ENCODE measurements at regions of chr1 and their contacts with region 1.

Region 1: GRCh38 chr1:86833461-86834215 is 80.3 kb downstream of the SELENOF start:
- DNase-seq: peak; percentile 79
- ATAC-seq: peak; percentile 98
- H3K4me3 ChIP-seq: no peak overlapping the region
- H3K27ac ChIP-seq: no peak overlapping the region
- H3K4me1 ChIP-seq: no peaks in the 10 kb centered on the region; a peak in 1 of 4 replicates
- H3K27me3 ChIP-seq: no peaks in the 10 kb centered on the region
- CTCF ChIP-seq: peak; percentile 43 to 80 (median 66)
- POLR2A ChIP-seq: no peak
- RAD21 ChIP-seq: peak; percentile 85

Region 2: GRCh38 chr1:86573763-86574484 is 259.7 kb before region 1 on chr1:
- CTCF ChIA-PET with region 1: no interaction called
- POLR2A ChIA-PET with region 1: no interaction called
- RAD21 ChIA-PET with region 1: no interaction called
- intact Hi-C with region 1: no loop called
- DNase-seq: no peak
- ATAC-seq: no peak
- H3K4me3 ChIP-seq: no peak overlapping the region
- H3K27ac ChIP-seq: no peak overlapping the region
- H3K4me1 ChIP-seq: no peaks in the 10 kb centered on the region
- H3K27me3 ChIP-seq: no peaks in the 10 kb centered on the region
- CTCF ChIP-seq: no peak
- POLR2A ChIP-seq: no peak
- RAD21 ChIP-seq: no peak

Region 3: DNA sequence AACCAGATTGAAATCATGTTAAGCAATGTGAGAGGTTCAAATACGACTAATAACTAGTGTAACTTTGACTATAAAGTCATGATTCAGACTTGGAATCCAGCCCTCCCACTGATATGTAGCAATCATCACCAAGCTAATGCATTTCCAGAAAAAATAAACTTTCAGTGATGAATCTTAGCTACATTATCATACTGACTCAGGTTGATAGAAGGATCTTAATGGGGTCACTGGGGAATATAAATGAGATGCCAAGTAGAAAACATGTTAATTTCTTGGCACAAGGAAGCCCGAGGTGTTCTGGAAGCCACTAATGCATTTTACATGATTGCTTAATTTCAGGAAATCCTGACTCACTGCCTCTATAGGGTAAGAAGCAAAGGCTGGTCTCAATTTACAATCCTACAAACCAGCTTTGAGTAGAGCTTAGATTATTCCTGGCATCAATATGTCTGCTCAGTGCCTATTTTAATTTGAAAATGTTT is 12.6 kb after region 1 on chr1:
- CTCF ChIA-PET with region 1: no interaction called
- POLR2A ChIA-PET with region 1: no interaction called
- RAD21 ChIA-PET with region 1: no interaction called
- intact Hi-C with region 1: no loop called
- DNase-seq: no peak
- ATAC-seq: no peak
- H3K4me3 ChIP-seq: no peak overlapping the region
- H3K27ac ChIP-seq: no peak overlapping the region
- H3K4me1 ChIP-seq: peaks cover 0 to 4% of the 10 kb centered on the region in 2 experiments; a peak in 1 of 4 replicates
- H3K27me3 ChIP-seq: no peaks in the 10 kb centered on the region
- CTCF ChIP-seq: no peak
- POLR2A ChIP-seq: no peak
- RAD21 ChIP-seq: no peak

Region 4: DNA sequence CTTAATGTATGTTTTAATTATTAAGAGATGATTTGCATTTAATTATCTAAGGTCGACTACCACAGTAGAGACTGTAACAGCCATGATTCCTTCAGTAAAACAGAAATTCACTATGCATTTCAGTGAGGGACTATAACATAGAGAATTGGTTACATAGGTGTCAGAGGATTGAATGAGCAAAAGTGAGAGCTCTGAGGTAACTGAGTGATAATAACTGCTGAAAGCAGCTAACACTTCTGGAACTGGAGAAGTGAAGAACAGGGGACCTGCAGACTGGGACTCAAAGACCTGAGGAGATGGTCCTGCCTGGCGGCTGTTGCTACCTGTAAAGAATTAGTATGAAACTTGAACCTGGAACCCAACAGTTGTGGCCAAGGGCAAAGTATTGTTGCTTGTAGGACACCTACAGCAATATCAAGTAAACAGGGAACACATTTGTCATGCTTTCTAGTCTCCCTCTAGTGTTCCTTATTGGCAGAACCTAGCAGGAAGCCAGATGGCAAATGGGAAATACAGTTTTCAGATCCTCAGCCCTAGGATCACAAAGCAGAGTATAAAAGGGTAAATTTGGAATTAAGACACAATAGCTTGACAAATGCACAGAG is 191.4 kb after region 1 on chr1:
- CTCF ChIA-PET with region 1: no interaction called
- POLR2A ChIA-PET with region 1: no interaction called
- RAD21 ChIA-PET with region 1: no interaction called
- intact Hi-C with region 1: loop called (anchors 1 kb)
- DNase-seq: peak; percentile 15
- ATAC-seq: peak; percentile 86
- H3K4me3 ChIP-seq: no peak overlapping the region
- H3K27ac ChIP-seq: no peak overlapping the region
- H3K4me1 ChIP-seq: no peaks in the 10 kb centered on the region
- H3K27me3 ChIP-seq: no peaks in the 10 kb centered on the region
- CTCF ChIP-seq: peak; percentile 38 to 60 (median 58); a peak in 5 of 6 replicates
- POLR2A ChIP-seq: no peak
- RAD21 ChIP-seq: peak; percentile 56

Region 5: DNA sequence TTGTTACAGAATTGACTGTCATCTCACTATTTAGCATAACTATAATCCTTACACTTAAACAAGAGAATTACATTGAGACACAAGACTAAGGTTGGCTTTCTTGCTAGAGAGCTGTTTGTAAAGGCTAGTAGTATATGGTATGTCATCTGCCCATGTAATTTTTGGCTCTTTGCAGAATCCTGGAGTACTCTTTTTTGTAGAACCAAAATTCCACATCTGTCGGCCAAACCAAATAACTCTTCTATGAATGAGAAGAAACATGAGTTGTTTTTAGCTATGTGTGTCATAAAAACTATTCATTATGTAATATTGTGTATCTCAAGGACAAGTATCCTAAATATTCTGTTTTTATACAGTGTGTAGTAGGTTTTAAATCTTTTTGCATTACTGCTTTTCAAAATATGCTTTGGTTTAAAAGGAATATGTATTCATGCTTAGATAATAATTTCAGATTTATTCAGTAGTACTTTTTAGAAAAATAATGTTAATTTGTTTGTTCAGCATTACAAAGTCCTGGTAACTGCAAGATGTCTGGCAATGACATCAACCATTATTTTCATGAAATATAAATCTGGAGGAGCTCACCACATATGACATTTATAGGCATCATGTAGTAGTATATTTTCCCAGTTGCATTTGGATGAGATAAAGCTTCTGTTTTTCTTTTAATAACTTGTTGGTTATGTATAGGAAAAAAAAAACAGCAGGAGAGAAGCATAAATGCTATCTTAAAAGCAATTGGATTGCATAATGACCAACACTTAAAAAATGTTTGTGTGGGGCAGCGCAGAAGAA is 240.6 kb after region 1 on chr1:
- CTCF ChIA-PET with region 1: no interaction called
- POLR2A ChIA-PET with region 1: no interaction called
- RAD21 ChIA-PET with region 1: no interaction called
- intact Hi-C with region 1: no loop called
- DNase-seq: no peak
- ATAC-seq: no peak
- H3K4me3 ChIP-seq: no peak overlapping the region
- H3K27ac ChIP-seq: no peak overlapping the region
- H3K4me1 ChIP-seq: peaks cover 2 to 8% of the 10 kb centered on the region in 2 experiments; a peak in 2 of 4 replicates
- H3K27me3 ChIP-seq: no peaks in the 10 kb centered on the region
- CTCF ChIP-seq: no peak
- POLR2A ChIP-seq: no peak
- RAD21 ChIP-seq: no peak

Measured in HCT116 (cell line).